Mammary epithelial cell (primary cell): ENCODE measurements at regions of chr11 and their contacts with region 1.

Region 1: DNA sequence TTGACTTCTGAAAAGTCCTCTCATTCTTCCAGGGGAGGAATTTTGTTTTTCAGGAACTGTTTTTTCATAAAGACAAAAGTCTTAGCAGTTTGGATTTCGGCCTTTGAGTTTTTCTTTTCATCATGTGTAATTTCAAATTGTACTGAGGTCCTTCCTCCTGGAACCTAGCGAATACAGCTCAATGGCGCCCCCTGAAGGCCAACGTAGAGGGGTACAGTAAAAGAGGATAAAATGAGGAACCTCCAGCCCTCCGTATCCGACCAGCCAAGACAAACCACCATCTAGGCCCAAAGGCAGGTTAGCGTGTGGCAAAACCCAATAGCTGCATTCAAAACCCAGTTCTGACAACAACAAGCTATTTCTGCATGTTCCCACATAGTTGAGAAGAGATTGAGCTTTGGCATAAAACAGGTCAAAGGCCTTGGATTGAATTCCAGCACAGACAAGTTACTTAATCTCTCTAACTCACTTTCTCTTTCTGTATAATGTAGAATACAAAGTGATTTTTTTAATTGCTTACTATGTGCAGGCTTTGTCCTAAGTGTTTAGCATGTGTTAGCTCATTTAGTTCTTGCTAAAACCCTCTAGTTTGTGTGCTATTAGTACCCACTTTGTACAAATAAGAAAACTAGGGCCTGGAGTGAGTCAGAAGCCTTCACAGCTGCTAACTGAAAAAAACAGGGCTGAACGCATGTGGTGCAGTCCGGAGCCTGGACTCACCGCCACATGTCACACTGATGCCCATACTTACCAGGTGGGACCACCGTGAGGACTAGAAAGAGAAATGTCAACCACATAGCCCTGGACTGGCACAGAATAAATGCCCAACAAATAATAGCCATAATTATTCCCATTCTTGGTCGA is 43.2 kb upstream of the ETS1 start:
- DNase-seq: peak; percentile 60
- H3K4me3 ChIP-seq: no peak overlapping the region
- H3K27ac ChIP-seq: no peak overlapping the region
- H3K4me1 ChIP-seq: no peaks in the 10 kb centered on the region
- H3K27me3 ChIP-seq: no peaks in the 10 kb centered on the region
- CTCF ChIP-seq: peak; percentile 80 to 85

Region 2: DNA sequence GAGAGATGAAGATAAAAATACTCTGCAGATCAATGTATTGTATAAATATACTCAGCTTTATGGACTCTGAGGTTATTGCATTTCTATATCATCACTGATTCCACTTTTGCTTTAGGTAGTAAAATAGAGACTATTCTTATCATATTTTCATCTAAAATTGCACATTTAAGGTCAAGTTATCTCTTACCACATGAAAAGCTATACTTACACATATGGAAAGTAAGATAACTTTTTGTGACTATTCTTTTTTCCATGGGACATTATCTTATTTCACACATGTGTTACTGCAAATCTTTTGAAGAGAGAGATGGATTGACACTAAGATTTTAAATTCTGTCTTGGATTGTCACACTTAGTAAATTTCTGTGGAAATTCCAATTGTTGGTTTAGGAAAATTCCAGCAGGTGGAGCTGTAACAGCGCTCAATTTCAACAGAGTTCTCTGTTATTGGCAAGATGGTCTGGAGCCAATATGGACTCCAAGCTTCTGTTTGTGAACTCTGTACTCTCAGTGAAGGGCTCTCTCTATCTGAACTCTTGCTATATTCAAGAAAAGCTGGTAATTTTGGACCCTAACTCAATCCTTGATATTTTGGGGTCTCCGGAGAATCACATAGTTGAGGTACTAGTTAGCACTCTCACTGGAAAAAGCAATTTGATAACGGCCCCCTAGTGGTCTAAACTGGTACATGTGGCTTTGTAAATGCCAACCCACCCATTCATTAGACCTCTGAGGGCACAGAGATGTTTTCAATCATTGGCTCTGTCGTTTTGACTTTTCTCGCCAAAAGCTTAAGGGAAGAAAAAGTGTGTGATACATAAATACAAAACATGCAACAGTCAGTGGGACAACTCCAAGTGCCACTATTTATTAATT is 472.9 kb before region 1 on chr11:
- CTCF ChIA-PET with region 1: interaction called, 6 read pairs
- dilution Hi-C with region 1: no loop called
- in situ Hi-C with region 1: loop called in 1 of 2 experiments (anchors 10 kb)
- intact Hi-C with region 1: loop called (anchors 1 kb)
- DNase-seq: peak; percentile 67
- H3K4me3 ChIP-seq: peak overlapping the region in 2 of 3 experiments; percentile 13 to 26
- H3K27ac ChIP-seq: peak overlapping the region; percentile 11
- H3K4me1 ChIP-seq: no peaks in the 10 kb centered on the region
- H3K27me3 ChIP-seq: no peaks in the 10 kb centered on the region
- CTCF ChIP-seq: peak; percentile 73 to 76

Region 3: GRCh38 chr11:128172046-128172878 is 458.3 kb before region 1 on chr11:
- CTCF ChIA-PET with region 1: interaction called, 7 read pairs
- dilution Hi-C with region 1: no loop called
- in situ Hi-C with region 1: loop called (anchors 10 kb)
- intact Hi-C with region 1: loop called (anchors 1 kb)
- DNase-seq: peak; percentile 69
- H3K4me3 ChIP-seq: no peak overlapping the region
- H3K27ac ChIP-seq: peak overlapping the region; percentile 72
- H3K4me1 ChIP-seq: peaks cover 8% of the 10 kb centered on the region
- H3K27me3 ChIP-seq: no peaks in the 10 kb centered on the region
- CTCF ChIP-seq: peak; percentile 81 to 84

Region 4: DNA sequence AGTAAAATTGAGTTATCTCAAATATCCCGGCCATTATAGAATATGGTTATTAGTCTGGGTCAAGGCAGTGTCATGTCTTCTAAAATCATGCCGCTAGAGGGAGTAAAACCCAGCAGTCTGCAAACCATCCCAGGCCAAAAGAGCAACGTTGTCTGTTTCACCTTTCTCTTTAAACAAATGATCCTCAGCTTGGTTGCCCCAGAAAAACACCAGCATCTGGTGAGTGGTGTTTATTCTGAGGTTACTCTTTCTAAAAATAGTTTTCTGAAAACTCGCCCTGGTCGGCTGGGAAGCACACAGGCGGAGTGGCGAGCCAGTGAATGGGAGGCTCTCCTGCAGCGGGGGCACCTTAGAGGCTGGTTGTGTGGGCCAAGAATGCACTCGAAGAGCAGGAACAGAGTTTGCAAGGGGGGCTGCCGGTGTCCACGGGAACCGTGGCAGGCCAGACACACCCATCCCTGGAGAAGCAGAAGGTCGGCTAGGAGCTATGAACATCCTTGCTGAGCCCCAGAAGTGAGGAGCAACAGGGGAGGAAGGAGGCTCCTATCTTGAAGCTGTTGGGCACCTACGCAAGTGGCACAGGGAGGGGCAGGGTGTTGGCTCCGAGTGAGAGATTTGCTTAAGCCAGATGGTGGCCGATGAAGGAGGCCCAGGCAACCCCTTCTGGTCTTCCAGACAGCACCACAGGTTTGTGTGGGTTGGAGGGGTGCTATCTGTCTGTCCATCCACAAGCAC is 340.3 kb before region 1 on chr11:
- CTCF ChIA-PET with region 1: interaction called, 5 read pairs
- dilution Hi-C with region 1: no loop called
- in situ Hi-C with region 1: loop called (anchors 5 to 10 kb)
- intact Hi-C with region 1: loop called (anchors 1 kb)
- DNase-seq: peak; percentile 45
- H3K4me3 ChIP-seq: no peak overlapping the region
- H3K27ac ChIP-seq: no peak overlapping the region
- H3K4me1 ChIP-seq: peaks cover 4% of the 10 kb centered on the region
- H3K27me3 ChIP-seq: no peaks in the 10 kb centered on the region
- CTCF ChIP-seq: peak; percentile 79 to 86

Region 5: DNA sequence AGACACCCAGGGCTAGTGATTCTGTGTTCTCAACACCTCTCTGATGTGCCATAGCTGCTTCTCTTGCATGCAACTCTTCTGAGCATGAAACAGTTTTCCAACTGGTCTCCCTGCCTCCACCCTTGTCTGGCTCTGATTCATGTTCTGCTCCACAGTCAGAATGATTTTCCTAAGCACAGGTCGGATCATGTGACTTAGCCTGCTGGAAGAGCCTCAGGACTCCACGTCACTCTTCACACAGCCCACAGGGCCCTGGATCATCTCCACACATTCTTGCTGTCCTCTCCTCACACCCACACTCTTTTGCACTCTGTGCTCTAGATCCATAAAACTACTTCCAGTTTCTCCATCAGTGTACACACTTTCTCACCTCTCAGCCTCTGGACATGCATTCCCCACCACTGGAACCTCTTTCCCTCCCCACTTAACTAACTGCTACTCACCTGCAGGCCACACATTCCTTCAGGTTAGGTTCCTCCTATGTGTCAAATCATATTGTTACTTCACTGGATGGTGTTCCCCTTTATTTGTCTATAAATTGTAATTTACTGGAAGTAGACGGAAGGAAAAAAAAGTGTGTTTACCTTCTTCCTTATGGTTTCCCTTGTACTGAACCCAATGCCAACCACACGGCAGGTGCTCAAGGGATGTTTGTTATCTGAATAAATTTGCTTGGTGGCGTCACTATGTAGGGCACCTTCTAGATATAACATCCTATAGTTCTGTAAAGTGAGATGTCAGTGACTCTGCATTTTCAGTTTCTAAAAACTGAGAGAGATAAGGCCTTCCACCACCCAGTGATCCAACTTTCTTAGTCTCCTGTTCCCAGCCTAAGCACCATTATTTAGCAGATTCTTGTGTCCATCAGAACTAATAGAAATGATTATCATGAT is 176.9 kb before region 1 on chr11:
- CTCF ChIA-PET with region 1: no interaction called
- dilution Hi-C with region 1: no loop called
- in situ Hi-C with region 1: no loop called
- intact Hi-C with region 1: loop called (anchors 1 kb)
- DNase-seq: peak; percentile 94
- H3K4me3 ChIP-seq: no peak overlapping the region
- H3K27ac ChIP-seq: peak overlapping the region; percentile 67
- H3K4me1 ChIP-seq: peaks cover 56% of the 10 kb centered on the region
- H3K27me3 ChIP-seq: no peaks in the 10 kb centered on the region
- CTCF ChIP-seq: no peak

Region 6: DNA sequence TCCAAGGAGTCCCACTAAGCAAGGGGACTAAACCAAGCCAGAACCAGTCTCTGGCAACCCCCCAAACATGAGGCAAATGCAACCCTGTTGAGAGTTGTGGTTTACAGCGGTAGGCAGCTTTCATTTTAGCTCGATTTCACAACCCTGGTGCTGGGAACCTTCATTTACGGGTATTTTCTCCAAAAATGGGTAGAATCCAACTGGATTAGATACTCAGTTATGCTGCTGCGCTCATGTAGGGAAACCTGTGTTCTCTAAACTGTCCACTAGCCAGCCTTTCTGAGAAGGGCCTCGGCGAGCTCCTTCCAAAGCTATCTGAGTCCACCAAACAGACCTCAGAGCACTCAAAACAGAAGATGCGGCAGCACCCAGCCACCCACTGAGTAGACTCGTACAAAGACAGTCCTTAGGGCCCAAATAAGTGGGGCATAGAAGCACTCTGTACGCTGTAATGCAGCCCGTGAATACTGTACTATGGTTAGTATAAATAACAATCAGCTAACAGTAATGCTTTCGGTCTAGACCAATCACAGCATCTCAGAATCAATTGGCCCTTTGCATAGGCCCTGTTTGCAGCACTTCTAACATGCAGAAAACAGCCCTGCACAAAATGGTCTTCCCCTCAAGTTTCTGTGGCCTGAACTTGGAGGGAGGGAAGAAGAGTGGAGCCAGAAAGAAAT is 147.9 kb before region 1 on chr11:
- CTCF ChIA-PET with region 1: no interaction called
- dilution Hi-C with region 1: no loop called
- in situ Hi-C with region 1: no loop called
- intact Hi-C with region 1: loop called (anchors 1 kb)
- DNase-seq: no peak
- H3K4me3 ChIP-seq: no peak overlapping the region
- H3K27ac ChIP-seq: peak overlapping the region; percentile 3
- H3K4me1 ChIP-seq: peaks cover 24% of the 10 kb centered on the region
- H3K27me3 ChIP-seq: no peaks in the 10 kb centered on the region
- CTCF ChIP-seq: no peak